A673 (cell line): ENCODE measurements at regions of chr1 and their contacts with region 1.

Region 1: GRCh38 chr1:99754055-99754626 is 12.3 kb downstream of the FRRS1 start:
- DNase-seq: no peak
- H3K4me3 ChIP-seq: no peak overlapping the region
- H3K27ac ChIP-seq: no peak overlapping the region
- H3K4me1 ChIP-seq: peaks cover 20% of the 10 kb centered on the region
- H3K27me3 ChIP-seq: no peaks in the 10 kb centered on the region
- CTCF ChIP-seq: no peak

Region 2: DNA sequence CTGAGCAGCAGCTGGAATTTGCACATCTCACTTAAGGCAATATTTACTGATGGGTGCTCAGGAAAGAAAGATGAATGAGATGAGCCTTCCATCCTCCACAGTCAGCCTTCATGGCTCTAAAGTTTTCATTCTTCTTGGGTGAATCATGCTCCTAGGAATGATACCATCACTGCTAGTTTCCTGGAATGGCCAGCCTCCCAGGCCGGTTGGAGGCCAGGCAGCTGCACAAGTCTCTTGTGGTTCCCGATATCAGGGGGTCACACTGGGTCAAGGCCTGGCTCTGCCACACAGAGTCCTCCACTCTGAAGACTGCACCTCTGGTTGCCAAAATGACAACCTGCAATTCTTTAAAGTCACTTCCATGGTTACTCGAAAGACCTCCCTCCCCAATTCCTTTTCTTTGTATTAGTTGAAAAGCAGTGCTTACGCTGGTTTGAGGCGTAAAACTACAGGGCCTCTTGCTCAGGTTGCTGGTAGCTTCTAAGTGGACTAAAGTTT is 154.4 kb before region 1 on chr1:
- CTCF ChIA-PET with region 1: no interaction called
- POLR2A ChIA-PET with region 1: no interaction called
- intact Hi-C with region 1: no loop called
- DNase-seq: no peak
- H3K4me3 ChIP-seq: no peak overlapping the region
- H3K27ac ChIP-seq: no peak overlapping the region
- H3K4me1 ChIP-seq: no peaks in the 10 kb centered on the region
- H3K27me3 ChIP-seq: no peaks in the 10 kb centered on the region
- CTCF ChIP-seq: no peak

Region 3: DNA sequence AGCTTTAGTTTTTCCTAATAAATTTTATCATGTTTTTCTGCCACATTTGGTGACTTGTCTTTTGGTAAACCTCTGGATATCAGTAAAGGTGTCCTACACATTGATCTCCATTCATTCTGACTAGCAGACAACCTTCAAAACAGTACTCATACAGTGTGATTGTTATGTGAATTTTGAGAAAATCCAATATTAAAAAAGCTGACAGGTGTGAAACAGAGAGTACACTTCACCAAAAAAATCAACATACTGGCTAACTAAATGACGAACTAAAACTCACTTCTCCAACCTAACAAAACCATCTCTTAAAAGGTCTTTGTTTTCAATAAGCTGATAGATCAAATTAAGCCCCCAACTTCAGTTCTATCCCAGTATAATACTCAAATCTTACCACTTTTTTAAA is 10.8 kb after region 1 on chr1:
- CTCF ChIA-PET with region 1: no interaction called
- POLR2A ChIA-PET with region 1: interaction called, 12 read pairs
- intact Hi-C with region 1: no loop called
- DNase-seq: no peak
- H3K4me3 ChIP-seq: no peak overlapping the region
- H3K27ac ChIP-seq: no peak overlapping the region
- H3K4me1 ChIP-seq: peaks cover 7% of the 10 kb centered on the region
- H3K27me3 ChIP-seq: no peaks in the 10 kb centered on the region
- CTCF ChIP-seq: no peak

Region 4: GRCh38 chr1:99829269-99829668 is 75.1 kb after region 1 on chr1:
- CTCF ChIA-PET with region 1: no interaction called
- POLR2A ChIA-PET with region 1: no interaction called
- intact Hi-C with region 1: no loop called
- DNase-seq: no peak
- H3K4me3 ChIP-seq: no peak overlapping the region
- H3K27ac ChIP-seq: no peak overlapping the region
- H3K4me1 ChIP-seq: no peaks in the 10 kb centered on the region
- H3K27me3 ChIP-seq: no peaks in the 10 kb centered on the region
- CTCF ChIP-seq: no peak

Region 5: DNA sequence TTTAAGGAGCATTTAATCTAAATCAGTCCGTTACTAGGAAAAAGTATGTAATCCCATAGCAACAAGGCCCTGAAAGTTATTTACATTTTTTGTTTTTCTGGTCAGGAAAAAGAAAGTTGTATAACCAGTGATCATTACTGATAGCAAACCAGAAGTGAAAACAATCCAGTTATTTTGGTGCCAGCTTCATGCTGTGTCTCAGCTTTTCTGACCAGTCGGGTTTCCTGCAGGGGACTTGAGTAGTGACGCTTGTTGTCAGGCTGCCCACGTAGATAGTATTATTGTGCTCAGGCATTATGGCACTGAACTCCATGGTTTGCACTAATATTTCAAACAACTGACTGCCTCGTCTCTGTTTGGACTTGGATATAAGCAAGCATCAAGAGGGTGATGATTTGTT is 323.4 kb after region 1 on chr1:
- CTCF ChIA-PET with region 1: no interaction called
- POLR2A ChIA-PET with region 1: no interaction called
- intact Hi-C with region 1: no loop called
- DNase-seq: peak; percentile 64
- H3K4me3 ChIP-seq: no peak overlapping the region
- H3K27ac ChIP-seq: peak overlapping the region; percentile 37
- H3K4me1 ChIP-seq: peaks cover 31% of the 10 kb centered on the region
- H3K27me3 ChIP-seq: no peaks in the 10 kb centered on the region
- CTCF ChIP-seq: no peak